ENCODE measurements at regions of chr10 and their contacts with region 1.

Region 1: GRCh38 chr10:95406651-95407280 is 116.0 kb upstream of the PDLIM1 start:
- DNase-seq: no peak
- CTCF ChIP-seq: no peak

Region 2: GRCh38 chr10:94747838-94748237 is 658.9 kb before region 1 on chr10:
- CTCF ChIA-PET with region 1: no interaction called
- POLR2A ChIA-PET with region 1: interaction called, 17 read pairs
- DNase-seq: no peak
- CTCF ChIP-seq: no peak

Region 3: GRCh38 chr10:95350219-95350829 is 56.4 kb before region 1 on chr10:
- CTCF ChIA-PET with region 1: no interaction called
- POLR2A ChIA-PET with region 1: no interaction called
- DNase-seq: no peak
- CTCF ChIP-seq: no peak

Region 4: DNA sequence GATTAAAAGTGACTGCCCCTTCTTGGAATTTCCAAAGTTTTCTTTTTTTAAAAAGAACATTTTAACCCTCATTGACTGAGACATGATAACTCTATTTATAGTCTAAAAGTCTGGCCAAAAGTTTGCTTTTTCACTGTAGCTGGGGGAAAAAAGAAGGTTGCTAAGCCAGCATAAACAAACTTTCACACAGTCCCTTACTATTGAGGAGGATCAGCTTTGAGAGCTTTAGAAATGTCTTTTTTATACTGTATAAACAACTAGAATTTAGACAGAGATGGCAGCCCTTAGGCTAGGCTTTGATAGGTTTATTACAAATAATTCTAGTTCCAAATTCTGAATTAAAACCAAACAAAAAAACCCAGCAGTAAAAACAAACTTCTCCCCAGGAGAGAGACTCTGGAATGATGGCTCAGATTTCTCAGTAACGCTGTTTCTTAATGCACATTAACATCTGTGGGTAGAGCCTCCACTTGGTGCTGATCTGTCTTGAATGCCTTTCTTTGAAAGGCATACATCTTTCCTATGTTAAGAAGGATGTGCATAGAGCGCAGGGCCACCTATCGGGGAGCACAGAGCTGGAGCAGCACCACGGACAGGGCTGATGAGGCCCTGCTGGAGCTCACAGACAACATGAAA is 15.1 kb before region 1 on chr10:
- CTCF ChIA-PET with region 1: interaction called, 16 read pairs
- POLR2A ChIA-PET with region 1: no interaction called
- DNase-seq: no peak
- CTCF ChIP-seq: no peak